Activated T-helper 1 cell treated with anti-CD3 and anti-CD28 coated beads, Interleukin-12 subunit alpha, Interleukin-12 subunit beta, Interleukin-2, Interleukin-4 antibody, amounts not matched to agents 30 ng/mL and 10 ng/mL and 1 ng/mL, durations not matched to agents 14 hours and 24 hours and 36 hours (primary cell): ENCODE measurements at regions of chr22 and their contacts with region 1.

Region 1: GRCh38 chr22:40818747-40819598 is at the start of gene SLC25A17:
- DNase-seq: peak; percentile 82
- H3K4me3 Mint-ChIP-seq: peak within 1 kb of the TSS; percentile 87
- H3K27ac Mint-ChIP-seq: peak within 1 kb of the TSS; percentile 93
- H3K4me1 Mint-ChIP-seq: peaks cover 33% of the 10 kb centered on the region
- H3K27me3 Mint-ChIP-seq: no peaks in the 10 kb centered on the region
- total RNA-seq, gene SLC25A17: 29.4 and 34.0 TPM in 2 replicates

Region 2: DNA sequence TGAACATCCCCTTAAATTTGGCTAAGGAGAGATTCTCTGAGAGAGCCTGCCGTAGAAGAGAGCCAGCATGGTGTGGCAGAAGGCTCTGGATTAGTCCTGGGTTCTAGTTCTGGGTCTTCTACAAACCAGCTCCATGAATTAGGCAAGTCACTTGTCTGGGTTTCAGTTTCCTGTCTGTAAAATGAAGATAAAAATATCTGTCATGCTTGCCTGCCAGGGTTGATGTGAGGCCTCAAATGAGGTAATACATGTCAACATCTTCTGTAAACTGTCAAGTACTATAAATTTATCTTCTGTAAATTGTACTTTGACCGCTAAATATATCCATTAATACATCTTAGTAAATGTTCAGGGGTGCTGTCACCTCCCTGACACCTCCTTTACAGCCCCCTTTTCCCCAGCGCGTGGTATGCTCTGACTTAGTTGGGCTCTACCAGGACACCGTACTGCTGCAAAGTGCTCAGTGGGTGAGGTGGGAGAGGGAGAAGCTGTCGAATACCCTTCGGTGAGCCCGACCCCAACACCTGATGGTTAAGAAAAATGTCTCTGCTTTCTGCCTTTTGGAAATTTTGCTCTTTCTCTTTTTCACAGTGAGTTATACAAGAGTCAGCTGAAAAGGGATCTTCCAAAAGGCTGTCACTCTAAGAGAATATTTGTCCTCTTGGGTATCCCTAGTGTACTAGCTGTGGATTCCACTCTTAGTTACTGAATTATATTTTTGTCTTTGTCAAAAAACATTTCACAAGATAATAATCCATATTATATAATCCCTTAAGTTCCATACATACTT is 147.2 kb after region 1 on chr22:
- intact Hi-C with region 1: no loop called
- DNase-seq: no peak
- H3K4me3 Mint-ChIP-seq: no peak overlapping the region
- H3K27ac Mint-ChIP-seq: peak overlapping the region; percentile 56
- H3K4me1 Mint-ChIP-seq: peaks cover 13% of the 10 kb centered on the region
- H3K27me3 Mint-ChIP-seq: no peaks in the 10 kb centered on the region

Region 3: GRCh38 chr22:41022470-41023298 is 203.7 kb after region 1 on chr22:
- intact Hi-C with region 1: loop called (anchors 5 kb)
- DNase-seq: peak; percentile 68
- H3K4me3 Mint-ChIP-seq: peak overlapping the region; percentile 82
- H3K27ac Mint-ChIP-seq: peak overlapping the region; percentile 1
- H3K4me1 Mint-ChIP-seq: peaks cover 7% of the 10 kb centered on the region
- H3K27me3 Mint-ChIP-seq: peaks cover 8% of the 10 kb centered on the region